BJ (cell line): ENCODE measurements at regions of chr5 and their contacts with region 1.

Region 1: GRCh38 chr5:78300464-78301045 is 6.1 kb upstream of the AP3B1 start:
- DNase-seq: no peak
- H3K4me3 ChIP-seq: no peak overlapping the region
- H3K27me3 ChIP-seq: no peaks in the 10 kb centered on the region; the same call in 1 of the 2 replicates
- CTCF ChIP-seq: peak; percentile 36

Region 2: GRCh38 chr5:77645158-77645994 is 655.2 kb before region 1 on chr5:
- CTCF ChIA-PET with region 1: interaction called, 10 read pairs
- POLR2A ChIA-PET with region 1: no interaction called
- DNase-seq: no peak
- H3K4me3 ChIP-seq: no peak overlapping the region
- H3K27me3 ChIP-seq: peaks cover 44% of the 10 kb centered on the region
- CTCF ChIP-seq: no peak; the same call in 1 of the 2 replicates

Region 3: GRCh38 chr5:78327761-78328510 is 27.4 kb after region 1 on chr5:
- CTCF ChIA-PET with region 1: no interaction called
- POLR2A ChIA-PET with region 1: no interaction called
- DNase-seq: no peak
- H3K4me3 ChIP-seq: no peak overlapping the region
- H3K27me3 ChIP-seq: 0 out of 2 replicates have a peak, but pooled peaks cover 1% of the 10 kb centered on the region
- CTCF ChIP-seq: no peak